ENCODE measurements at regions of chr16 and their contacts with region 1.

Region 1: GRCh38 chr16:55502801-55503366 is 6.0 kb upstream of the LPCAT2 start:
- DNase-seq: no peak
- H3K4me3 ChIP-seq: no peak overlapping the region
- H3K27me3 ChIP-seq: no peaks in the 10 kb centered on the region
- CTCF ChIP-seq: 0 out of 2 replicates have a peak, but pooled peaks have one; percentile 19

Region 2: GRCh38 chr16:55471448-55472097 is 31.3 kb before region 1 on chr16:
- CTCF ChIA-PET with region 1: interaction called, 30 read pairs
- POLR2A ChIA-PET with region 1: no interaction called
- DNase-seq: no peak
- H3K4me3 ChIP-seq: no peak overlapping the region
- H3K27me3 ChIP-seq: no peaks in the 10 kb centered on the region
- CTCF ChIP-seq: no peak

Region 3: DNA sequence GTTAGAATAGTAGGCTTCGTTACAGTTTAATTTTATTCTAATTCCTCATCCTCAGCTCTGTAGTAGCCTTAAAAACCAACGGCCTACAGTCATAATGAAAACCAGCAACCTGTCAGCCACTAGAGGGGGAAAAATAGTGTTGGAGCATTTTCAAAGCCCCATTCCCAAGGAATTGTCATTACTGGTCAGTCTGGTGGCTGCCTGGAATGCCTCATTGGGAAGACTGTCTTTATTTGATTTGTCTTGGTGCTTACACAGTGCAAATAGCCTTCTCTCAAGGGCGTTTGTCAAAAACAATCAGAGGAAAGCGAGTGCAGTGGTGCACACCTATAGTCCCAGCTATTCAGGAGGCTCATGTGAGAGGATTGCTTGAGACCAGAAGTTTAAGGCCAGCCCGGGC is 10.7 kb after region 1 on chr16:
- CTCF ChIA-PET with region 1: interaction called, 10 read pairs
- POLR2A ChIA-PET with region 1: interaction called, 10 read pairs
- DNase-seq: no peak
- H3K4me3 ChIP-seq: no peak overlapping the region
- H3K27me3 ChIP-seq: no peaks in the 10 kb centered on the region
- CTCF ChIP-seq: no peak

Measured in BJ (cell line).